ENCODE measurements at regions of chr2 and their contacts with region 1.

Region 1: DNA sequence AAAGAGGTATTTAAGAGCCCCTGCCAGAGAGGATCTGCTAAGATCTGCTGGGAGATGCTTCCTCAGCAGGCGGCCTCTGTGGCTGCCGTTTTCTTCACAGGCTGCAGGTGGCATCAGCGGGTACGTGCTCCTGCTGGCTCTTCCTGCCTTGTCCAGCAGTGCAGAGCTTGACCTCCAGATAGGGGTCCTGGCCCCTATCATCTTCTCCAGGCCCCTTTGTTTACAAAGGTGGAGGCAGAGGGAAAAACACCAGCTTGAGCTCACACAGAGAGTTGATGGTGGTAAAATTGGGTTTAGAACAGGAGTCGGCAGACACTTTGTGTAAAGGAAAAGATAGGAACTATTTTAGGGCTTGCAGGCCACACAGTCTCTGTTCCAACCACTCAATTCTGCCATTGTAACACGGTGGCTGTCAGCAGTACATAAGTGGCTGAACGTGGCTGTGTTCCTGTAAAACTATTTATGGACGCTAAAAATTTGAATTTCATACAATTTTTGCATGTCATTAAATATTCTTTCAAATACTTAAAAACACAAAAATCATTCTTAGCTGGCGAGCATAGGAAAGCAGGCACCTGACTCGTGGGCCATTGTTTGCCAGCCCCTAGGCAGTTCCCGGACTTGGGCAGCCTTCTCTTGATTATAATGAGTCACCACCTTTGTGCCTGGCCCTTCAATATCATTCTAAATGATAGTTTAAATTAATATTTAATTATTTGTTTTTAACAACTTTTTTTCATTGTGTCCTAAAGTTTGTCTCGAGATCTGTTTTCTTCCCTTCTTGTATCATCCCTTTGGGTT is 98.2 kb upstream of the B3GNT7 start:
- H3K4me3 Mint-ChIP-seq: no peak overlapping the region
- H3K27ac Mint-ChIP-seq: peak overlapping the region; percentile 17
- H3K4me1 Mint-ChIP-seq: peaks cover 54% of the 10 kb centered on the region
- H3K27me3 Mint-ChIP-seq: peaks cover 3% of the 10 kb centered on the region

Region 2: DNA sequence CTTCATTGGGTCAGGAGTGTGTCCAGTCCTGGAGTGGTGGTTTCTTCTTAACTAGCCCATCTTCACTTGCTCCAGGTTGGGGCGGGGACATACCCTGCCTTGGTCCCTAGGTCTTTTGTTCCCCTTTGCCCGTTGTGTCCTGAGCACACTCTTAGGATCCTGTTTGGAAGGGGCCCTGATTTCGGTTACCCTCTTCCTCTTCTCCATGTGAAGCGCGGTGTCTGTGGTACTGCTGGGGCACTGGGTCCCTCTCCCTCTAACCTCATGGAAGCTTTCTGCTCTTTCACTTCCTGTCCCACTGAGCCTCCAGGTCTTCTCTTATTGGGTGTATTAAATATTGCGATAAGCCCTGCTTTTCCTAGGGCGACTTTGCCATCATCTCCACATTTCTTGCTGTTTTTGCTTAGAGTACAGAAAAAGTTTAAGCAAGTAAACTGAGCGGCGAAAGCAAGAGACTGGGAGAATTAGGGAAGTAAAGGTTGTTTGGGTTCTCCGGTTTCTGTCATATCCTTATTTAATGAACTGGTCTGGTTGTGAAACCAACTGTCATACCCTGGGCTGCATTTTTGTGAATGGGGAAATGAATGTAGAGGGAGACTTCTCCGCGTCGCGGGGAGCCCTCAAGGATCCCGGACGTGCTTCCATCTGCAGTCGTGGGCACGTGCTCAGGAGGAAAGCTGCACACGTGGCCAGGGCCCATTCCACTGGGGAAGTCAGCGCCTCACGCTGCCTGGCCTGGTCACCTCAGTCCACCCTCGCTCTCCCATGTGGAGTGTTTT is 24.4 kb after region 1 on chr2:
- intact Hi-C with region 1: loop called (anchors 1 kb)
- H3K4me3 Mint-ChIP-seq: peak overlapping the region; percentile 52
- H3K27ac Mint-ChIP-seq: peak overlapping the region; percentile 92
- H3K4me1 Mint-ChIP-seq: peaks cover 62% of the 10 kb centered on the region
- H3K27me3 Mint-ChIP-seq: peaks cover 6% of the 10 kb centered on the region

Region 3: DNA sequence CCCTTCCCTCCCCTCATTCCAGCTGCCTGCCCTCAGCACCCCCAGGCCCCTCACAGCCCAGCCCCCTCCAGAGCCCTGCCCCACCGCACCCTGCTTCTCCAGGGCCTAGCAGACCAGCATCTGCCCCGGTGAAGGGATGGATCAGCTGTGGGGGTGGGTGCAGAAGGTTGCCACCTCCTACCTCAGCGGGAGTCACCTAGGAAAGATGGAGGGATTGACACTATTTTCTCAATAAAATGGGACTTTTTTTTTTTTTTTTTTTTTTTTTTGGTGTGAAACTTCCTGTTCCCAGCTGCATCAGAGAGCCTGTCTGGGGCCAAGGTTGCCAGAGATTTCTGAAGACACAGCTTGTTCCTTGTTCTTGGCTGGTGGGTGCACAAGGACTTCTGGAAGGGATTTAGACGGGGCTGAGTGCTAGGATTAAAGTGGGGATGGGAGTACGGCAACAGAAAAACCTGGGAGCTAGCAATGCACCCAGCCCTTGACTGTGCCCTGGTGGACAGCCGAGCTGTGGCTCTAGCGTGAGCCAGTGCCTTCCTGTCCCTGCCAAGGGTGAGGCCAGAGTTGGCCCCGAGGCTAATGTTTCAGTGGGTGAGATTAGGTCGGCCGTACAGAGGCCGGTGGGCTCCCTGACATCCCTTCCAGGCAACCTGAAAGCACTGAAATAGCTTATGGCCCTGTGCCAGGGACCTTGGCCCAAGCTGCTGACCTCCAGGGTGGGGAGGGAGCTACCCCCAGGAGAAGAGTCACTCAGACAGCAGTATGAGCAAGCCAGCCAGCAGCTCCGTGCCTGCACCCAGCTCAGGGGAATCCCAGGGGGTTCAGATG is 102.8 kb after region 1 on chr2:
- intact Hi-C with region 1: loop called (anchors 5 kb)
- H3K4me3 Mint-ChIP-seq: no peak overlapping the region
- H3K27ac Mint-ChIP-seq: peak overlapping the region; percentile 37
- H3K4me1 Mint-ChIP-seq: peaks cover 17% of the 10 kb centered on the region
- H3K27me3 Mint-ChIP-seq: peaks cover 18% of the 10 kb centered on the region

Region 4: DNA sequence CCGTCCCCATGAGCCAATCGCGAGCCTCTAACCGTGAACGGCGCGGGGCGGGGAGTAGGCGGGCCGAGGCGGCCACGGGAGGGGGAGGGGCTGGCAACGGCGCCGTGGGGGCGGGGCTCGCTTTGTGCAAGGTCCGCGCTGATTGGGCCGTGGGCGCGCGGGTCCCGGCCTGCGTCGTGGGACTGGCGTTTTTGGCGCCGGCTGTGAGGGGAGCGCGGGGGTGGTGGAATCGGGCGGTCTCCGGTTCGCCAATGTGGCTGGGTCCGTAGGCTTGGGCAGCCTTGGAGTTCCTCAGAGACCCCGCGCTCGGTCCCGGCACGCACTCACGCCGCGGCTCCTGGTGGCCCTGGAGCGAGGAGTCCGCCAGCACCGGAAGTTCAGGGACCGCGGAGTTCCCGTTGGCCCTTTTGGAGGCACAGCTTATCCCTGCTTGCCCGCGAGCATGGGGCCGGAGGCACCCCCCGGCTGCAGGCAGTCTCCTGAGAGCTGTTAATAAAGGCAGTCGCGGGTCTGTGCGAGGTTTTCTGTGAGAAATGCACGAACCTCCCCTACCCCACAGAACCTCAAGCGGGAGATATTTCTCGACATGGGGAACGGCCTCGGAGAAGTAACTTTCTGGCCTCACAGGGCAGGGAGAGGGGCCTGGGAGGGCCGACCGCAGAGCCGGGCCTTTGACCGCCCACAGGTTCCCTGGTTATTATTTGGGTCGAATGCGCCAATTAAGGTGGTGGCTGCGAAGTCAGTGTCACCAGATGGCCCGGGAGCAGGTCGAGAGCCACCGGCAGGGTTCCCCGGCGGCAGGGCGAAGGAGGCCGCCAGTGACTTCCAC is 167.5 kb after region 1 on chr2:
- intact Hi-C with region 1: no loop called
- H3K4me3 Mint-ChIP-seq: peak overlapping the region; percentile 96
- H3K27ac Mint-ChIP-seq: peak overlapping the region; percentile 94
- H3K4me1 Mint-ChIP-seq: peaks cover 71% of the 10 kb centered on the region
- H3K27me3 Mint-ChIP-seq: no peaks in the 10 kb centered on the region